IMR-90 (cell line): ENCODE measurements at regions of chr1 and their contacts with region 1.

Region 1: DNA sequence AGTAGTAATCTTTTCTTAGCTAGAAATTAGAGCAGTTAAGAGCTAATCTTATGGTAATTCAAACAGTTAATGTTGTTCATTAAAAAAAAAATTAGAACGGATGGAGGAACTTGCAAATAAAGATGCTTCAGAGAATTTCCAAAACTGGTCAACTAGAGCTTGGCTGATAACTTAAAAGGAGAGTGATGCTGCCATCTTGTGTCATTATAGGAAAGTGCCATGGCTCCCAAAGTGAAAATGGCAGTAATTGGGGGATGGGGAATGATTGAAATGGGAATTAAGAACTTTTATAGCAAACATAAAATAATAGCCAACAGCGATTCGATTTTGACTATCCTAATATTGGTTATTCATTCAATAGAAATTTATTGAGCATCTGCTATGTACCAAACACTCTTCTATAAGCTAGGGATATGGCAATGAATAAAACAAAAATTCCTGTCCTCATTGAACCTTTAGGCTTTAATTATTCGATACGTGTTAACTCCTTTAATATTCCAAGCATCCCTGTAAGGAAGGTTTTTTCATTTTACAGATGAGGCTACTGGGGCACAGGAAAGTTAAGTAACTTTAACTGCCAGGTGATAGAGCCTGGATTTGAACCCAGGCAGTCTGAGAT is 5.7 kb upstream of the PLPP3 start:
- DNase-seq: peak; percentile 77
- ATAC-seq: peak; percentile 89
- H3K4me3 ChIP-seq: no peak overlapping the region
- H3K27ac ChIP-seq: no peak overlapping the region
- H3K4me1 ChIP-seq: no peaks in the 10 kb centered on the region
- H3K27me3 ChIP-seq: no peaks in the 10 kb centered on the region
- CTCF ChIP-seq: peak; percentile 94
- POLR2A ChIP-seq: no peak
- RAD21 ChIP-seq: peak; percentile 93

Region 2: DNA sequence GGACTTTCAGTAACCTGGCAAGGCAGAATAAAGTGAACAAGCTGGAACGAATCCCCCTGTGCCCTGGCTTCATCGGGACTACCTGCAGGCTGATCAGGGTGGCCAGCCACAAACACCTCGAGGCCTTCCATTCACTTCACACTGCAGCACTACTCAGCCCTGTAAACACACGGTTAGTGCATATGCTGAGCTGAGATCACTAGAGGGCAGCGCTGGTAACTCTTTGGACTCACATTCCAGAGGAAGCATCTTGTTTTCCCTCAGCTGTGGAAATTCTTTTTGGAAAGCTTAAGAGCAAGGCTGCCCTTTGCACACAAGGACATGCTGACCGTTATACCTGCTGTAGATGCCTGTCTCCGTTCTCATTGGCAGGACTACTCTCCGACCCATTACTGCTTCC is 1513.5 kb before region 1 on chr1:
- CTCF ChIA-PET with region 1: no interaction called
- POLR2A ChIA-PET with region 1: no interaction called
- dilution Hi-C with region 1: no loop called
- in situ Hi-C with region 1: no loop called
- intact Hi-C with region 1: loop called (anchors 5 kb)
- DNase-seq: peak; percentile 70
- ATAC-seq: peak; percentile 100
- H3K4me3 ChIP-seq: no peak overlapping the region
- H3K27ac ChIP-seq: no peak overlapping the region
- H3K4me1 ChIP-seq: no peaks in the 10 kb centered on the region
- H3K27me3 ChIP-seq: no peaks in the 10 kb centered on the region
- CTCF ChIP-seq: peak; percentile 59
- POLR2A ChIP-seq: no peak
- RAD21 ChIP-seq: peak; percentile 42

Region 3: GRCh38 chr1:55140546-55140983 is 1444.5 kb before region 1 on chr1:
- CTCF ChIA-PET with region 1: no interaction called
- POLR2A ChIA-PET with region 1: no interaction called
- dilution Hi-C with region 1: no loop called
- in situ Hi-C with region 1: loop called (anchors 10 kb)
- intact Hi-C with region 1: loop called (anchors 10 kb)
- DNase-seq: peak; percentile 91
- ATAC-seq: peak; percentile 100
- H3K4me3 ChIP-seq: no peak overlapping the region
- H3K27ac ChIP-seq: no peak overlapping the region
- H3K4me1 ChIP-seq: no peaks in the 10 kb centered on the region
- H3K27me3 ChIP-seq: no peaks in the 10 kb centered on the region
- CTCF ChIP-seq: peak; percentile 89
- POLR2A ChIP-seq: 0 out of 2 replicates have a peak, but pooled peaks have one; percentile 38
- RAD21 ChIP-seq: peak; percentile 89

Region 4: DNA sequence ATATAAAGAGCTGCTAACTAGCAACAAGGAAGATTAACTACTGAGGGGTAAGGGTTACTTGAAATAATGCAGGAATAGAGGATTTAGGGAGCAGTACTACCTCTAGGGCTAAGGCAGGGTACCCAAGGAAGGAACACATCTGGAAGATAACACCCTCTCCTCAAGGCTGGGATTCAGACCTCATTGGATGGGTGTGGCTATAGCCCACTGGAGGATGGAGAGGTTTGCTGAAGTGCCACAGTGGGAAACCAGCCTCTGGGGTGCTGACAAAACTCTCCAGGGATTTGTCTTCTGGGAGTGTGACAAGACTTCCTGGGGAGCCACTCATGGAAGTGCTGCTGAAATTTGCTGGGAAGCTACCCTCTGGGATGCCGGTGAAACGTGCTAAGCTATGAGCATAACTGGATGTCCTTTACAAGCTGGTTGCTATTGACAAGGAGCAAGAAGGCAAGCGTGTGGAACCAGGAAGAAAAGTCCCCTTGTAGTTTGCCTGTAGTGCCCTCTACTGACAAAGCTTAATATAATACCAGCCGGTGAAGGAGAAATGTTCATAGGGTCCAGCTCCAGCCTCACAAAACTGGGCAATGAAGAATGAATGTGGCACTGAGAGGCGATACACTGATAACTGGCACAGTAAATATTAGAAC is 1247.1 kb before region 1 on chr1:
- CTCF ChIA-PET with region 1: interaction called, 4 read pairs
- POLR2A ChIA-PET with region 1: no interaction called
- dilution Hi-C with region 1: no loop called
- in situ Hi-C with region 1: no loop called
- intact Hi-C with region 1: loop called (anchors 1 kb)
- DNase-seq: peak; percentile 79
- ATAC-seq: peak; percentile 96
- H3K4me3 ChIP-seq: no peak overlapping the region
- H3K27ac ChIP-seq: no peak overlapping the region
- H3K4me1 ChIP-seq: no peaks in the 10 kb centered on the region
- H3K27me3 ChIP-seq: no peaks in the 10 kb centered on the region
- CTCF ChIP-seq: peak; percentile 77
- POLR2A ChIP-seq: no peak
- RAD21 ChIP-seq: peak; percentile 88

Region 5: GRCh38 chr1:55375617-55376258 is 1209.3 kb before region 1 on chr1:
- CTCF ChIA-PET with region 1: interaction called, 4 read pairs
- POLR2A ChIA-PET with region 1: no interaction called
- dilution Hi-C with region 1: no loop called
- in situ Hi-C with region 1: no loop called
- intact Hi-C with region 1: loop called (anchors 2 kb)
- DNase-seq: peak; percentile 47
- ATAC-seq: peak; percentile 68; the same call in 1 of the 2 replicates
- H3K4me3 ChIP-seq: no peak overlapping the region
- H3K27ac ChIP-seq: 0 out of 2 replicates have a peak overlapping the region, but pooled peaks have one; percentile 4
- H3K4me1 ChIP-seq: peaks cover 13% of the 10 kb centered on the region
- H3K27me3 ChIP-seq: no peaks in the 10 kb centered on the region
- CTCF ChIP-seq: peak; percentile 79
- POLR2A ChIP-seq: no peak
- RAD21 ChIP-seq: peak; percentile 76

Region 6: DNA sequence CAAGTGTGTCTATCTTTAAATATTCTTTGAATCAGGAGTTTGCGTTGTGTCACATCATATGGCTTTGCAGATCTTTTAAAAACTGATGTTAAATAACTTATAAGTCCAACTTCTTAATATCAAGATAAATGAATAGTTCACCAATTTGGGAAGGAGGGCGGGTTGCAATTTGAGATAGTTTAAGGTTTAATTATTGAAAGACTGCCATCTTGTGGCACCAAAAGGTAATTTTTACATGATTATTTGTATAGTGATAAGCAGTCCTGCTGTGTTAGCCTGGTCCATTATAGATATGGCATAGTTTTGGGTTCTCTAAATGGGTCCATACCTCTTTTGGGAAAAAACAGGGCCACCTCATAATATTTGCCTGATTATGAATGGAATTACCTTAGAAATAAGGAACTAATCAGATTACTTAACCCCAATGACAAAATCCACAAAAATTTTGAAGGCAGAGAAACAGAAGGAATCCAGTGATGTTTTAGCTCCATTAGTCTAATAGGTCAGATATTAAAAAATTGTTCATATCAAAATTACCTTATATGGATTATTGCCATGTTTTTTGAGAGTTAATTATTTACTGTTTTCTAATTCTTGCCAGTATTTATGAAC is 124.4 kb after region 1 on chr1:
- CTCF ChIA-PET with region 1: interaction called, 3 read pairs
- POLR2A ChIA-PET with region 1: no interaction called
- dilution Hi-C with region 1: no loop called
- in situ Hi-C with region 1: no loop called
- intact Hi-C with region 1: loop called (anchors 2 kb)
- DNase-seq: peak; percentile 65
- ATAC-seq: peak; percentile 67
- H3K4me3 ChIP-seq: no peak overlapping the region
- H3K27ac ChIP-seq: no peak overlapping the region
- H3K4me1 ChIP-seq: peaks cover 2% of the 10 kb centered on the region; the same call in 1 of the 2 replicates
- H3K27me3 ChIP-seq: no peaks in the 10 kb centered on the region
- CTCF ChIP-seq: peak; percentile 56
- POLR2A ChIP-seq: no peak
- RAD21 ChIP-seq: peak; percentile 59

Region 7: DNA sequence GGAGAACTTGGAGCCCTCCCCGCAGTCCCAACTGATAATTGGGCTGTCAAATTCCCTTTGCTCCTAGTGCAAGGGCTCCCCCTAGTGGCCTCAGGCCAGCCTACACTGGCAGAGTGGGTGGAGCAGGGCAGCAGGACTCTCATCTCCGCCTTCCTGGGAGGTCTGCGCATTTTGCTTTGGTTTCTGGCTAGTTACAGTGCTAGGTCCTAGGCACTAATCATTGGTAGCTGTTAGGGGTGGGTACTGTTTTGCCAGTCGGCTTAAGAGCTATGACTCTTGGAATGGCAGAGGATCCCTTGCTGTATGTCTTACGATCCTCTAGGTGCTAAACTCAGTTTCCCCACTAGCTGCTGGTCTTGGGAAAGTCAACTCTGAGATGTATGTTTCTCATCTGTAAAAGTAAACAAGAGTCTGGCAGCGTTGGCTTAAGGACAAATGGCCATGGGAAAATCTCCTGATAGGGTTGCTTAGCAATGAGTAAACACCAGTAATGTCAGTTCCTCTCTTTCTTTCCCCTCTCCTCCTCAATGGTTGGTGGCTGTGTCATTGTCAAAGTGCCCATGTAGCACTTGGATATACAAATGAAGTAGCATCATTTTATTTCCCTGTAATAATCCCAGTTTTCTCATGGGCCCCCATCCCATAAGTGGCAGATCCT is 236.2 kb after region 1 on chr1:
- CTCF ChIA-PET with region 1: interaction called, 3 read pairs
- POLR2A ChIA-PET with region 1: no interaction called
- dilution Hi-C with region 1: no loop called
- in situ Hi-C with region 1: loop called (anchors 10 kb)
- intact Hi-C with region 1: loop called (anchors 2 kb)
- DNase-seq: peak; percentile 79
- ATAC-seq: peak; percentile 93
- H3K4me3 ChIP-seq: no peak overlapping the region
- H3K27ac ChIP-seq: no peak overlapping the region
- H3K4me1 ChIP-seq: peaks cover 13% of the 10 kb centered on the region
- H3K27me3 ChIP-seq: no peaks in the 10 kb centered on the region
- CTCF ChIP-seq: peak; percentile 95
- POLR2A ChIP-seq: no peak
- RAD21 ChIP-seq: peak; percentile 91